ENCODE measurements at regions of chr12 and their contacts with region 1.

Region 1: DNA sequence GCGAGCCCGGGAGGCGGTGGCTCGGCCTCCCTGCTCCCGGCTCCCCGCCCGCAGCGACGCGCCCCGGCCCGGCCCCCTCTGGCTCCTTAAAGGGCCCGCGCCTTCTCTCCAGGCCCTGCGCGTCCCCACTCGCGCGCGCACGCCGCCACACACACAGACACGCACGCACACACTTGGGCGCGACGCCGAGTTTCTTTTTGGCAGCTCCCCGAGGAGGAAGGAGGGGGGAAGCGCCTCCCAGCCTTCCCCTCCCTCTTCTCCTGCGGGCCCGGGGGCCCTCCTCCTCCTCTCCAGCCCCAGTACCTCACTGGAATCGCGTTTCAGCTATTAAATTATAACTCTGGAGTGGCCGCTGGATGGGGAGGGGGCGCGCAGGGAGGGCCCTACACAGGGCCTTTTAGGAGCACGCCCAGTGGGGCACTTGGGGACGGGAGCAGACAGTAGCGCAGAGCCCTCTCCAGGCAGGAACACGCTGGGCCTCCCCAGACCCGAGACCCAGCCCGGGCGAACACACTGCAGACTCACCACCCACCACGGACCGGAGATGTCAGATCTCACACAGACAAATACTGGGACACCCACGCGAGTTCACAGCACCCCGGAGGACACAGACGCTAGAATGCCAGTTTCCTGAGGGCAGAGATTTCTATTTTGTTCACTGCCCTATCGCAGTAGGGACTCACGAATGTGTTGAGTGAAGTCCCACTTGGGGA is 405 bp upstream of the NCOR2 start:
- DNase-seq: peak; percentile 79
- H3K4me3 ChIP-seq: peak overlapping the region; percentile 8 to 97 (median 39)
- H3K27ac ChIP-seq: peak overlapping the region; percentile 31
- H3K4me1 ChIP-seq: peaks cover 27% of the 10 kb centered on the region
- H3K27me3 ChIP-seq: no peaks in the 10 kb centered on the region
- CTCF ChIP-seq: no peak

Region 2: DNA sequence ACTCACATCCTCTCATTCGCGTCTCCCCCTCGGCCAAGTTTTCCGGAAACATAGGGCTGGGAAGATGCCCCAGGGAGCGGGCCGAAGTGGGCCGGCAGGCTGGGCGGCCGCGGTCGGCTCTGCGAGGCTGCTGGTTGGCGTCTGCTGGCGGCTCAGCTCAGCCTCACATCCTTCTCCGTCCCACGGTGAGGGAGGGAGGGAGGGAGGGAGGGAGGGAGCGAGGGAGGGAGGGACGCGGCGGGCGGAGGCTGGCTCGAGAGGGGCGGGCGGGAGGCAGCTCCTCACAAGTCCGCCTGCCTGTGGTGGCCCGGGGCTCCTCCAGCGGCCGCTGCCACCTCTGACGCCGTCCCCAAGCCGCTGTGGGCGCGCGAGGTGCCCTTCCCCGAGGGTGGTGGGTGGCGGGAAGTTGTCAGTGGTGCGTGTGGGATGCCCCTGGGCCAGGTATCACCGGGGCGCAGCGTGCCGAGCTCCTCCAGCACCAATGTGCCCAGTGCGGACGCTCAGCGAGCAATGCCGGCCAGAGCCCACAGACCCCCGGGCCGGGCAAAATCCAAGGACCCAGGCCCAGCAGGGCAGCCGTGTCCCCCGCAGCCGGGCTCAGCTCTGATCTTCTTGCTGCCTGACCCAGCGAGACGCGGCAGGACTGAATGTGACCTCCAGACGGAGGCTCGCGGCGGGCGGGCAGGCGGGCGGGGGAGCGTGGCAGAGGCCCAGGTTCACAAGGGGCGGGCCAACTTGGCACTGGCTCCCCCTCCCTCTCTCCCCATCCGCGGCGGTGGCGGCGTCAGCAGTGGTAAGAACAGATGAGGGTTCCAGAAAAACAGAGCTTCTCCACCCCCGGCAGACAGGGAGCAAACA is 178.9 kb before region 1 on chr12:
- CTCF ChIA-PET with region 1: no interaction called
- dilution Hi-C with region 1: no loop called
- in situ Hi-C with region 1: no loop called
- intact Hi-C with region 1: loop called (anchors 10 kb)
- DNase-seq: peak; percentile 69
- H3K4me3 ChIP-seq: peak overlapping the region in 2 of 3 experiments; percentile 22 to 32
- H3K27ac ChIP-seq: no peak overlapping the region
- H3K4me1 ChIP-seq: peaks cover 53% of the 10 kb centered on the region
- H3K27me3 ChIP-seq: no peaks in the 10 kb centered on the region
- CTCF ChIP-seq: no peak

Region 3: DNA sequence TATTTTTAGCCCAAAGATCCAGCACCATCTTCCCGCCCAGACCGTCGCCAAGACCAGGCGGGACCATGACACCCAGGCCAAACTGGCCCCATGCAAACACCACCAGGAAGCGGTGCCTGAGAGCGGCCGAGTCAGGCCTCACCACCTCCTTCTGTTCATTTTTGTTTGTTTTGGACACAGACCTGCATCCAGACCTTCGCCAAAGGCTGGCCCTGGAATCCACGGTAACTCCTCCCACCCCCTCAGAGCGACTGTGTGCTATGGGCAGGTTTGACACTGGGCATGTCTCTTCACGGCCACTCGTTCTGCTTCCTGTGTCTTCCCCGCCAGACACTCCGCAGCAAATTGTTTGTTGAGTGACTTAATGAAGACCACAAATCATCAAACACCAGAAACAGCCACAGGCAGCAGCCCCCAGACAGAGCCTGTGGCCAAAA is 47.5 kb before region 1 on chr12:
- CTCF ChIA-PET with region 1: no interaction called
- dilution Hi-C with region 1: no loop called
- in situ Hi-C with region 1: no loop called
- intact Hi-C with region 1: loop called (anchors 1 kb)
- DNase-seq: peak; percentile 87
- H3K4me3 ChIP-seq: no peak overlapping the region
- H3K27ac ChIP-seq: peak overlapping the region; percentile 90
- H3K4me1 ChIP-seq: peaks cover 89% of the 10 kb centered on the region
- H3K27me3 ChIP-seq: no peaks in the 10 kb centered on the region
- CTCF ChIP-seq: no peak

Region 4: GRCh38 chr12:124609041-124609995 is 41.5 kb after region 1 on chr12:
- CTCF ChIA-PET with region 1: no interaction called
- dilution Hi-C with region 1: no loop called
- in situ Hi-C with region 1: no loop called
- intact Hi-C with region 1: no loop called
- DNase-seq: peak; percentile 82
- H3K4me3 ChIP-seq: no peak overlapping the region
- H3K27ac ChIP-seq: peak overlapping the region; percentile 12
- H3K4me1 ChIP-seq: peaks cover 22% of the 10 kb centered on the region
- H3K27me3 ChIP-seq: no peaks in the 10 kb centered on the region
- CTCF ChIP-seq: no peak

Region 5: DNA sequence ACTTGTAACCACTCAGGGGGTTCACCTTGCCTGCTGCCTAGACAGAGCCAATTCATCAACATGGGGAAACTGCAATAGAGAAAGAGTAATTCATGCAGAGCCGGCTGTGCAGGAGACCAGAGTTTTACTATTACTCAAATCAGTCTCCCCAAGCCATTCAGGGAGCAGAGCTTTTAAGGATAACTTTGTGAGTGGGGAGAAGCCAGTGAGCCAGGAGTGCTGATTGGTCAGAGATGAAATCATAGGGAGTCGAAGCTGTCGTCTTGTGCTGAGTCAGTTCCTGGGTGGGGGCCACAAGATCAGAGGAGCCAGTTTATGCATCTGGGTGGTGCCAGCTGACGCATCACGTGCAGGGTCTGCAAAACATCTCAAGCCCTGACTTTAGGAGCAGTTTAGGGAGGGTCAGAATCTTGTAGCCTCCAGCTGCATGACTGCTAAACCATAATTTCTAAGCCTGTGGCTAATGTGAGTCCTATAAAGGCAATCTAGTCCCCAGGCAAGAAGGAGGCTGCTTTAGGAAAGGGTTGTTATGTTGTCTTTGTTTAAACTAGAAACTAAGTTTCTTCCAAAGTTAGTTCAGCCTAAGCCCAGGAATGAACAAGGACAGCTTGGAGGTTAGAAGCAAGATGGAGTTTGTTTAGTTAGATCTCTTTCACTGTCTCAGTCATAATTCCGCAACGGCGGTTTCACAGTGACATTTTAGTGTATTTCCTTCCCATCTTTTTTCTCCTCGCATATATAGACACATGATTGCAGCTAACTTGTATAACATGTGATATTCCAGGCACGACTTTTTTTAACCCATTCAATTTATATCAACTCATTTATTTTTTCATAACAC is 68.5 kb after region 1 on chr12:
- CTCF ChIA-PET with region 1: no interaction called
- dilution Hi-C with region 1: no loop called
- in situ Hi-C with region 1: no loop called
- intact Hi-C with region 1: loop called (anchors 2 kb)
- DNase-seq: peak; percentile 96
- H3K4me3 ChIP-seq: no peak overlapping the region
- H3K27ac ChIP-seq: peak overlapping the region; percentile 71
- H3K4me1 ChIP-seq: peaks cover 64% of the 10 kb centered on the region
- H3K27me3 ChIP-seq: no peaks in the 10 kb centered on the region
- CTCF ChIP-seq: no peak

Region 6: DNA sequence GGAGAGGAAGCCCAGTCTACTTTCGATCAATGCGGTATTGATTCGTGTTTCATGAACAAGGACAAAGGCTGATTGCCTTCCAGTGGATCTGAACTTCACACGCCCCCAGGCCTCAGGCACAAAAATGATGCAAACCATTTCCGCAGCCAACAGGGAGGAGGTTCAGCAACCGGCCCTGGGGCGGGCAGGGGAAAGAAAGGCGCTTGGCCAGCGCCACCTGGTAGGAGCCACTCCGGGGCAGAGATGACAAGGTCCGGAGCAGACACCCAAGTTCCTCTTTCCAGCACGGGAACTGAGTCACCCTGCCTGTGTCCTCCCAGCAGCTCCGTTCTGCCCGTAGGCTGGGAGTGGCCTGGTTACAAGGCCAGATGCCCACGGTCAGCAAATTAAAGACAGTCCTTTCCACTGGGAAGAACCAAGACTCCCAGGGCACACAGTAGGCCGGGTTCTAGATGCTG is 159.5 kb after region 1 on chr12:
- CTCF ChIA-PET with region 1: no interaction called
- dilution Hi-C with region 1: no loop called
- in situ Hi-C with region 1: no loop called
- intact Hi-C with region 1: loop called (anchors 1 kb)
- DNase-seq: peak; percentile 80
- H3K4me3 ChIP-seq: no peak overlapping the region
- H3K27ac ChIP-seq: peak overlapping the region; percentile 37
- H3K4me1 ChIP-seq: peaks cover 8% of the 10 kb centered on the region
- H3K27me3 ChIP-seq: no peaks in the 10 kb centered on the region
- CTCF ChIP-seq: peak in 1 of 2 donors; percentile 15

Region 7: DNA sequence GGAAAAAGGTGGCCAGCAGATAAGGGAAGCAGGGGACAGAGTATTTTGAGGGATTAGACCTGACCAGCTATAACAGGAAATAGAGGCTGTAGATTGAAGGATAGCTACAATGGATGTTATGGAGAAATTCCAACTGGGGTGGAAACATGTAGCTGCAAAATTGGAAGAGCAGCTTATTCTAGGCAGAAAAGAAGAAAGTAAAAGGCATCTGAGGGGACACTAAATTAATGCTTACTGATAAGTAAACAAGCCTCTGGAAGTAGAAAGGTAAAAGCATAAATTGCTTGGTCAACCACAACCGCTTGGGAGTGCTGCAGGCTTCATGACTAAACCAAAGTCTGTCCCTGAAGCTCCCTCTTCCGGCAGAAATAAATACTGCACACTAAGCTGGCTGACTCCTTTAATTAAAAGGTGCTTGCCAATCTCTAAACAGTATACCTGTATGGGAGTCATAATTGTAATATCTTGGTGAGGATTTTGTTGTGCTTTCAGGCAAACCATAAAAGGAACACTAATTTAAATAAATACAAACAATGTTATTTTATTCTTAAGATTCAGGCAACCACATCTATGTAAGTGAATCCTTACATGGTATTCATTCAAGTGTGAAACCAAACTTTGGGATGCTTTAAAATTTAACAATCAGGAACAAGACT is 338.9 kb after region 1 on chr12:
- CTCF ChIA-PET with region 1: no interaction called
- dilution Hi-C with region 1: no loop called
- in situ Hi-C with region 1: no loop called
- intact Hi-C with region 1: loop called (anchors 5 kb)
- DNase-seq: peak; percentile 89
- H3K4me3 ChIP-seq: no peak overlapping the region
- H3K27ac ChIP-seq: no peak overlapping the region
- H3K4me1 ChIP-seq: peaks cover 25% of the 10 kb centered on the region
- H3K27me3 ChIP-seq: no peaks in the 10 kb centered on the region
- CTCF ChIP-seq: peak; percentile 97 to 100

Measured in mammary epithelial cell (primary cell).